GM10248 (cell line): ENCODE measurements at regions of chr5 and their contacts with region 1.

Region 1: DNA sequence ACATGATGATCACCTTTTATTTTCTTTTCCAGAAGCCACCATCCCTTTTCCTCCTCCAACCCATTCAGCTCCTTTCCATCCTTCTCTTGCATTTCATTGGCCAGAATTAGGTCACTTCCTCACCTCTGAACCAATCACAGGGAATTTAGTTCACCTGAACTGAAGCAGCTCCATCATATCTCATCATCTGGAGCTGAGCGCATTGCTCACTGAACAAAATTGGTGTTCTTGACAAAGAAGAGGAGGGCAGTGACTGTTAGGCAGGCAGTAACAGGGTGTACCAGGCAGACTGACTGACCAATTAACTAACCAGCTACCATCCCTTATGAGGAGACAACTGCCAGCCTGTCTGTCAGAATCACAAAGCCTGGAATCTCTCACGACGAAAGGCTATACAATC is 1.8 kb upstream of the ZNF354A start:
- DNase-seq: no peak
- CTCF ChIP-seq: no peak

Region 2: DNA sequence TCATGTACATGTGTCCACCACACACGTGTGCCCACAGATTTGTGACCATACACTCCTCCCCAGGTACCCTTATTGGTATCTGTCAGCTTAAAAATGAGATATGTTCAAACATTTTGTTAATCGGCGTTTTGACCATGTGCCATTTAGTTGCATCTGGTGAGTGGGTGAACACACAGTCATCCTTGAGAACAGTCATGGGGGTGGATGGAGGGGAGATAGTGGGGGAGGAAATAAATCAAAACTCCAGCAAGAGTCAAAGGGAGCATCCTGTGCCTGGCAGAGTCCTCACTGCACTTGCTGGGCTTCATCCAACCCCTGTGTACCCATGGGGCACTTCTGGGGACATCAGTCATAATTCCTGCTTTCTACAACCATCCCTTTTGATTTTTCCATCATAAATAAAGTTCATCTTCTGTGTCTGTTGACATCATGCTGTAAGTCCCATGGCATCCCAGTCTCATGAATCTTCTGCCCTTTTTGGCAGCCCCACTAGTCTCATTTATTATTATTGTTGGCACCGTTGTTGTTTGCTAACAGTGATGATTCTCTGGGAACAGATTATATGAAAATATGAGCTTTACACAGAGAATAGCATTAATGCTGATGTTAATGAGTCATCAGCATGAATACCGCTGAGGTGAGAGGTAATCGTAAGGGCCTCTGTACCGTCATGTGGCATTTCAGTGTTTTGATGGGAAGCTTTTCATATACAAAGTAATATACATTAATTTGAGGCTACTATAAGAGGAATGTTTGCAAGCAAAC is 81.1 kb before region 1 on chr5:
- CTCF ChIA-PET with region 1: no interaction called
- POLR2A ChIA-PET with region 1: no interaction called
- DNase-seq: no peak
- CTCF ChIP-seq: no peak

Region 3: GRCh38 chr5:178859625-178860531 is 127.6 kb after region 1 on chr5 and contains the start of gene ZNF354B:
- CTCF ChIA-PET with region 1: interaction called, 10 read pairs
- POLR2A ChIA-PET with region 1: no interaction called
- DNase-seq: peak; percentile 90
- CTCF ChIP-seq: no peak